GM10248 (cell line): ENCODE measurements at regions of chrX and their contacts with region 1.

Region 1: DNA sequence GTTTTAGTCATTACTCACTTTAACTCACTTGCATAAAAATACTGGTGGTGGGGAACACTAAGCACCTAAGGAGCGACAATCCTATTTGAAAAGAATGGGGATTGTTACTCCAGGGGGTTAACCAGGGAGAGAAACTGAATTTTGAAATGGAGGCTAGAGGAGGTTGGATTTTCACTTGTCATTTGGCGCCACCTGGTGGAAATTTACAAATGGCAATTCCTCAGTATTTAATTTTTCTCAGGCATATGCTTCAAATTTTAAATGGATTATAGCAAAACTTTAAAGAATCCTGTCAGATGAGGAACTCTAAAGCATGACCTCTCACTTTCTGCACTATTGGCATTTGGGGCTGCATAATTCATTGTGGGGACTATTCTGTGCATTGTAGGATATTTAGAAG is 2.7 kb upstream of the GEMIN8 start:
- DNase-seq: no peak
- CTCF ChIP-seq: peak; percentile 39

Region 2: GRCh38 chrX:13506574-13506973 is 525.8 kb before region 1 on chrX:
- CTCF ChIA-PET with region 1: interaction called, 31 read pairs
- POLR2A ChIA-PET with region 1: no interaction called
- DNase-seq: peak; percentile 59
- CTCF ChIP-seq: peak; percentile 42

Region 3: DNA sequence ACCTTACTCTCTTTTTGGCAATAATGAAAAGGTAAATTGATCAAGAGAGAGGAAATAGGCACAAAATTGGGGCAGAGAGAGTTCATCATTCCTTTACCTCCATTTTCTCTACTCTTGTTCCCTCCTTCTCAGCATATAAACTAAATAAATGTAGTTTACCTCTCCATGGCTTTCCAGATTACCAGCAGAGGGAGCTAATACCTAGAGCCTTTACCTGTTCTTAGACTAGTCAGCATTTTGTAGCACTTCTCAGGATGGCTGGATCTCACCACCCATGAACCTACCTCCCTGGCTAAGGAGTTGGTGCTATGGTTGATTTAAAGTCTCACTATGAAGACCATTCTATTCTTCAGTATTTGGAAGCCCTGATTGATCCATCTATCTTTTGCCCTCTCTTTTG is 282.2 kb before region 1 on chrX:
- CTCF ChIA-PET with region 1: interaction called, 12 read pairs
- POLR2A ChIA-PET with region 1: no interaction called
- DNase-seq: peak; percentile 29
- CTCF ChIP-seq: peak; percentile 45

Region 4: DNA sequence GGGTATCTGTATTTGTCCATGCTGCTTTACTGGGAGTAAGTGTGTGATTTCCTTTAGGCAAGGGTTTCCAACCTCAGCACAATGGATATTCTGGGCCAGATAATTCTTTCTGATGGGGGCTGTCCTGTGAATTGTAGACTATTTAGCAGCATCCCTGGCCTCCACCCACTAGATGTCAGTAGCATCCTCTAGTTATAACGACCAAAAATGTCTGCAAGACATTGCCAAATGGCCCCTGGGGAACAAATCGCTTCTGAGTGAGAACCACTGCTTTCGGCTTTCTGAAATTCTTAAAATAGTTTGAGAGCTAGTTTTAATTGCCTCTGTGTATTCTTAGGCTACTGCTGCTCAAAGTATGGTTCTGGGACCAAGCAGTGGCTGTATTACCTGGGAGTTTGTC is 134.3 kb before region 1 on chrX:
- CTCF ChIA-PET with region 1: interaction called, 24 read pairs
- POLR2A ChIA-PET with region 1: no interaction called
- DNase-seq: peak; percentile 15
- CTCF ChIP-seq: peak; percentile 32

Region 5: GRCh38 chrX:13955095-13955647 is 77.2 kb before region 1 on chrX:
- CTCF ChIA-PET with region 1: no interaction called
- POLR2A ChIA-PET with region 1: no interaction called
- DNase-seq: no peak
- CTCF ChIP-seq: no peak